Mammary epithelial cell (primary cell): ENCODE measurements at regions of chr18 and their contacts with region 1.

Region 1: DNA sequence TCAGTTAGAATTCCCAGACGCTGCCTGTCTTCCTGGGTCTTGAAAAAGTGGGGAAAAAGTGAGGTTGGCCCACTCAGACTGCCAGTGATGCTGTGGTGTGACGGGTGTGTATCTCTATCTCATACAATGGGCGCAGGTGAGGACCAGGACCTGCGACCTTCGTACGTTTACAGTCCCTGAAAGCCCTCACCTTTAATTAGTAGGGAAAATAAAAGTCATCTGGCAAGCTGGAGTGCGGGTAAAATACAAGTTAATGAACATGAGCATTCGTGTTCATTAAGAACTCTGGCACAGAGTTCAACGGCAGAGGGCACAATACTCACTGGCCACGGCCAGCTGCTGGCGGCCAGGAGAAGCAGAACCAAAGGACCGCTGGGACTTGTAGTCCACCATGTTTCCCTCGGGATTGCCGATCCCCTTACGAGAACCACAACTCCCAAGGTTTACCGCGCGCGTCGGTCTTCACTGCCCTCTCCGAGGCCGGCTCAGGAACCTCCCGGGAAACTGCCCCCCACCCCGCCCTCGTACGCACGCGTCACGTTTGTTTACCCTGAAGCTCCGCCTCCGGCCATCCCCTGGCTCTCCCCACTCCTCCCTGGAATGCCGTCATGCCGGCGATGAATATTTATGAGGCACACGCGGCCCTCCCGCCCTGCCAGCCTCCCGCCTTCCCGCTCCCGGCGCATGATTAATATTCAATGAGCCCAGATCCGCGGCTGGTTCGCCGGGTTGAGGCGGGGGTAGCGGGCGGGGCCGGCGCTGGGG is 488 bp upstream of the PHLPP1 start:
- DNase-seq: peak; percentile 99
- H3K4me3 ChIP-seq: peak overlapping the region; percentile 73 to 93 (median 86)
- H3K27ac ChIP-seq: peak overlapping the region; percentile 53
- H3K4me1 ChIP-seq: peaks cover 10% of the 10 kb centered on the region
- H3K27me3 ChIP-seq: no peaks in the 10 kb centered on the region
- CTCF ChIP-seq: peak; percentile 62 to 87

Region 2: GRCh38 chr18:62324917-62325805 is 389.7 kb before region 1 on chr18 and contains the start of gene TNFRSF11A:
- CTCF ChIA-PET with region 1: no interaction called
- dilution Hi-C with region 1: no loop called
- in situ Hi-C with region 1: no loop called
- intact Hi-C with region 1: loop called (anchors 10 kb)
- DNase-seq: peak; percentile 58
- H3K4me3 ChIP-seq: peak within 1 kb of the TSS; percentile 54 to 71 (median 64)
- H3K27ac ChIP-seq: no peak within 1 kb of the TSS
- H3K4me1 ChIP-seq: peaks cover 14% of the 10 kb centered on the region
- H3K27me3 ChIP-seq: peaks cover 3% of the 10 kb centered on the region
- CTCF ChIP-seq: peak; percentile 7 to 47
- total RNA-seq, gene TNFRSF11A: 0.50 to 6.1 TPM

Region 3: GRCh38 chr18:62584241-62585120 is 130.4 kb before region 1 on chr18:
- CTCF ChIA-PET with region 1: interaction called, 10 read pairs
- dilution Hi-C with region 1: no loop called
- in situ Hi-C with region 1: no loop called
- intact Hi-C with region 1: loop called (anchors 1 kb)
- DNase-seq: peak; percentile 67
- H3K4me3 ChIP-seq: no peak overlapping the region
- H3K27ac ChIP-seq: no peak overlapping the region
- H3K4me1 ChIP-seq: peaks cover 6% of the 10 kb centered on the region
- H3K27me3 ChIP-seq: no peaks in the 10 kb centered on the region
- CTCF ChIP-seq: peak; percentile 98 to 99

Region 4: DNA sequence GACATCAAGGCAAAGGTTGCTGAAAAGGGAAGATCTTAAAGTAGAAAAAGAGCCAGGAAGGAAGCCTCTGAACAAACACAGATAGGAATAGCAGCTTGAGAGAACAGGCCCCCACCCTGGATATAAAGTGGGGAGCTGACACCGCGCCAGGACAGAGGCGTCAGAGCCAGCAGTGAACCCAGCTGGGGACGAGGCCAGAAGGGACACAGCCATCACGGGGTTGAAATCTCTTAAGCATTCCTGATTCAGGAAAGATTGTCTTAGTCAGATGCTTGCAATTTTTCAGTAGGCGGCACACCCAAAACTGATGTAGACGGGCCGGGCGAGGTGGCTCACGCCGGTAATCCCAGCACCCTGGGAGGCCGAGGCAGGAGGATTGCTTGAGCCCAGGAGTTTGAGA is 93.3 kb before region 1 on chr18:
- CTCF ChIA-PET with region 1: no interaction called
- dilution Hi-C with region 1: no loop called
- in situ Hi-C with region 1: no loop called
- intact Hi-C with region 1: no loop called
- DNase-seq: no peak
- H3K4me3 ChIP-seq: no peak overlapping the region
- H3K27ac ChIP-seq: no peak overlapping the region
- H3K4me1 ChIP-seq: peaks cover 3% of the 10 kb centered on the region
- H3K27me3 ChIP-seq: no peaks in the 10 kb centered on the region
- CTCF ChIP-seq: no peak

Region 5: DNA sequence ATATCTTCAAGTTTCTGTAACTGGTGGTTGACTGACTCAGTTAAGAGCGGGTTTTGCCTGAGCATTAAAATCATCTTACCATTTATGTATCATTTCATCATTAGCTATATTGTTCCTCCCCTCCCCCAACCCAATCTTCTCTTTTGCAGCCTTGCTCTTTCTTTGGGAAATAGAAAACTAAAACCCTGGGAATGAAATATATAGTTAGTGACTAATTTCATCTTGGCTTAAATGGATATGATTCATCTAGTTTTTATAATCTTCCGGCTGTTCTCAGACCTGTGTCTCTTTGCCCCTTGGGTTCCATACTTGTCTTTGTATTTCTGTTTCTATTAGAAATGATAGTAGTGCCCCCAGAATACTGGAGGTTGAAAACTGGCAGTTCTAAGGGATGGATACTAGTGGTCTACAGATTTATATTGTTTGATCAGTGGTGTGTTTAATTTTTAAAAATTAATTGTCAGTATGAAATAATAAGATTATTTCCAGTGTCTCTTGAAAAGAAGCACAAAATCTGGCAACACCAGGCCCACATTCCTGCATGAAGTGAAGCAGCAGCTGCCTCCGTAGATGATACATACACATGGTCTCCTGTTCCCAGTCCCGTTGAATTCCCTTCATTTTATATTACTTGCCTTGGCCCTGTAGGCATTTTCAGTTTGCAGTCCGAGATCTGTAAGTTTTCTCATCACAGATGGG is 45.0 kb after region 1 on chr18:
- CTCF ChIA-PET with region 1: no interaction called
- dilution Hi-C with region 1: no loop called
- in situ Hi-C with region 1: loop called in 1 of 2 experiments (anchors 5 kb)
- intact Hi-C with region 1: loop called (anchors 2 kb)
- DNase-seq: peak; percentile 64
- H3K4me3 ChIP-seq: no peak overlapping the region
- H3K27ac ChIP-seq: peak overlapping the region; percentile 58
- H3K4me1 ChIP-seq: peaks cover 45% of the 10 kb centered on the region
- H3K27me3 ChIP-seq: no peaks in the 10 kb centered on the region
- CTCF ChIP-seq: no peak

Region 6: DNA sequence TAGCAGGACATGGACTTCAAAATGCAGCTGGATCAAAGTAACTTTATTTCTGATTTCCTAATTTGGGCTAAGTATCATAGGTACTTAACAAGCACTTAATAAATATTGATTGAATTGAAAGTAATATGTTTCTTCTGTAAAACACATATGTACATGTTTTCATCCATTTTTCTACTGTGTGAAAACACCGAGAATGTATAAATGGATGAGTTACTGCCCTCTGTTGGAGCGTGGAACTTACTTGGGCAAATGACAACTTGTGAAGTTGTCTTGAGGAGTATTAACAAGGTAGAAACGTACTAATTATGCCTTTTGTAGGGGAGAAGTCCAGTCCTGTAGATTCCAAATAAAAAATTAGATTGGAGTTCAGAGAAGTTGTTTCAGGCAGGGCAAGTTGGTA is 87.7 kb after region 1 on chr18:
- CTCF ChIA-PET with region 1: interaction called, 8 read pairs
- dilution Hi-C with region 1: no loop called
- in situ Hi-C with region 1: no loop called
- intact Hi-C with region 1: loop called (anchors 1 kb)
- DNase-seq: no peak
- H3K4me3 ChIP-seq: no peak overlapping the region
- H3K27ac ChIP-seq: no peak overlapping the region
- H3K4me1 ChIP-seq: no peaks in the 10 kb centered on the region
- H3K27me3 ChIP-seq: no peaks in the 10 kb centered on the region
- CTCF ChIP-seq: peak in 1 of 2 donors; percentile 47

Region 7: DNA sequence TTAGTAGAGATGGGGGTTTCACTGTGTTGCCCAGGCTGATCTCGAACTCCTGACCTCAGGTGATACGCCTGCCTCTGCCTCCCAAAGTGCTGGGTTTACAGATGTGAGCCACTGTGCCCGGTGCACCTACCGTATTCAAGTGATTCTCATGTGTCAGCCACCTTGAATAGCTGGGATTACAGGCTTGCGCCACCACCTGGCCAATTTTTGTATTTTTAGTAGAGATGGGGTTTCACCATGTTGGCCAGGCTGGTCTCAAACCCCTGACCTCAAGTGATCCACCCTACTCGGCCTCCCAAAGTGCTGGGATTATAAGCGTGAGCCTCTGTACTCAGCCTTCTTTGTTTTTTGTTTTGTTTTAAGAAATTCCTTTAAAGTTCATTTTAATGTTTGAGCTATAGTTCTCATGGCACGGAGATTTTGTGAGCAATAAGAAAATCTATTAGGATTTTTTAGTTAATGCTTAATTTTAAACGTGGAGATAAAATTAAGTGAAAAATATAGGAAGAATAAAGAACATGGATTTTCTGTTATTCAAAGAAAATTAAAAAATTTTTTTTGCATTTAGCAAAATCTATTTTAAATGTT is 243.1 kb after region 1 on chr18:
- CTCF ChIA-PET with region 1: interaction called, 3 read pairs
- dilution Hi-C with region 1: no loop called
- in situ Hi-C with region 1: loop called in 1 of 2 experiments (anchors 10 kb)
- intact Hi-C with region 1: loop called (anchors 1 kb)
- DNase-seq: peak; percentile 19
- H3K4me3 ChIP-seq: no peak overlapping the region
- H3K27ac ChIP-seq: no peak overlapping the region
- H3K4me1 ChIP-seq: no peaks in the 10 kb centered on the region
- H3K27me3 ChIP-seq: no peaks in the 10 kb centered on the region
- CTCF ChIP-seq: peak; percentile 14 to 50